ENCODE measurements at regions of chr2 and their contacts with region 1.

Region 1: GRCh38 chr2:74391580-74392448 is 11.7 kb upstream of the DCTN1 start:
- DNase-seq: peak; percentile 97
- H3K4me3 ChIP-seq: peak overlapping the region; percentile 94
- H3K27ac ChIP-seq: peak overlapping the region; percentile 80
- H3K4me1 ChIP-seq: peaks cover 16% of the 10 kb centered on the region
- H3K27me3 ChIP-seq: no peaks in the 10 kb centered on the region
- CTCF ChIP-seq: peak; percentile 98

Region 2: DNA sequence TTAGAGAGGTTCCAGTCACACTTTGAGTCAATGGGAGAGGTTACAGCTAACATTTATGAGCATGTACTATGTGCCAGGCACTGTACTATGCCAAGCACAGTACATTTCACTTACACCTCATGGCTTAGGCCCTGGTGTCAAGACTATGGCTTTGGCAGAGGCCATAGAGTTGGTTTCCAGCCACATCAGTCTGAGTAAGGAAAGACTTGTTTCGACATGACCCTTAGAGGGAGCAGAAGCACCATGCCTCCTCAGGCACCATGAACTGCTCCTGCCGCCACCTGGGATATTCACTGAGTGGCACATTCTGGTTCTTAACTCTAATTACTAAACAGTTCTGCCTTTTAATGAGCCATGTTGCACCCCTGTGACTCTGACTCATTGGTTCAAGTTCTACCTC is 452.4 kb before region 1 on chr2:
- intact Hi-C with region 1: no loop called
- DNase-seq: no peak
- H3K4me3 ChIP-seq: no peak overlapping the region
- H3K27ac ChIP-seq: no peak overlapping the region
- H3K4me1 ChIP-seq: no peaks in the 10 kb centered on the region
- H3K27me3 ChIP-seq: no peaks in the 10 kb centered on the region
- CTCF ChIP-seq: no peak

Region 3: GRCh38 chr2:74261204-74261864 is 130.5 kb before region 1 on chr2:
- intact Hi-C with region 1: loop called (anchors 10 kb)
- DNase-seq: peak; percentile 34
- H3K4me3 ChIP-seq: no peak overlapping the region
- H3K27ac ChIP-seq: no peak overlapping the region
- H3K4me1 ChIP-seq: no peaks in the 10 kb centered on the region
- H3K27me3 ChIP-seq: no peaks in the 10 kb centered on the region
- CTCF ChIP-seq: peak; percentile 17

Measured in colonic mucosa (tissue), 4 donors.